A549 (cell line): ENCODE measurements at regions of chr7 and their contacts with region 1.

Region 1: GRCh38 chr7:151631968-151632749 is 112.5 kb upstream of the RHEB start:
- DNase-seq: peak; percentile 49 to 77
- ATAC-seq: peak; percentile 91
- H3K4me3 ChIP-seq: peak overlapping the region; percentile 91
- H3K27ac ChIP-seq: peak overlapping the region; percentile 94
- H3K4me1 ChIP-seq: peaks cover 27% of the 10 kb centered on the region
- CTCF ChIP-seq: peak; percentile 82
- EP300 ChIP-seq: no peak
- POLR2A ChIP-seq: peak; percentile 46
- RAD21 ChIP-seq: peak; percentile 32 to 62; a peak in 4 of 5 replicates

Region 2: DNA sequence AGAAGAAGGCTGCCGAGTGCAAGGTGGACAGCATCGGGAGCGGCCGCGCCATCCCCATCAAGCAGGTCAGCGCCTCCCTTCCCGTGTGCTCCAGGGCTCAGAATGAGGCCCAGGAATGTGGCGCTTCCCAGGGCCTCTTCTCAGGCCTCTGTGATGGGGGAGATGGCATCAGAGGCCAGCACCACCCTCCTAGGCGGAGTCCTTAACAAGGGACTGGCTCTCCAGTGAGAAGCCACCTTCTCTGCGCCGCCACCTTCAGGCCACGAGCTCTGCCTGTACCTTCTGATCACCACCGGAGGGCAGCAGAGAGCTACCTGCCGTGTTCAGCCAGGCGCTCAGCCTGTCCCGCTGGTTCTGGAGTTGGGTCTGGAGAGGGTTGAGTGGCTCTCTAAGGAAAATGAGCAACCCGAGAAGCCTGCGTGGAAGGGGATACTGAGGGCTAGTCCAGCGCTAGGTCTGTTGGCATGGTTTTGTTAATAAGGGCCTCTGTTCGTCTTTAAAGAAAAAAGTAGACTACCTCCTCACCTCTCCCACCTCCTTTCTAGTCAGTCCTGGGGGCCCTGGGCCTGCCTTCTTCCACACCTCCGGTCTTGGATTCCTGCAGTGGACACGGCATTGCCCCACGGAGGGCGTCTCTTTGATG is 508.2 kb before region 1 on chr7:
- CTCF ChIA-PET with region 1: no interaction called
- POLR2A ChIA-PET with region 1: no interaction called
- DNase-seq: peak; percentile 85 to 94
- ATAC-seq: peak; percentile 90 to 96
- H3K4me3 ChIP-seq: no peak overlapping the region
- H3K27ac ChIP-seq: no peak overlapping the region
- H3K4me1 ChIP-seq: no peaks in the 10 kb centered on the region
- CTCF ChIP-seq: peak; percentile 97
- EP300 ChIP-seq: no peak
- POLR2A ChIP-seq: no peak
- RAD21 ChIP-seq: peak; percentile 85 to 87

Region 3: GRCh38 chr7:151432791-151433521 is 199.2 kb before region 1 on chr7:
- CTCF ChIA-PET with region 1: no interaction called
- POLR2A ChIA-PET with region 1: no interaction called
- DNase-seq: peak in 1 of 2 experiments; percentile 49
- ATAC-seq: peak in 1 of 2 experiments; percentile 57; a peak in 3 of 6 replicates
- H3K4me3 ChIP-seq: no peak overlapping the region
- H3K27ac ChIP-seq: peak overlapping the region in 1 of 2 experiments; percentile 52; a peak in 3 of 6 replicates
- H3K4me1 ChIP-seq: peaks cover 23% of the 10 kb centered on the region
- CTCF ChIP-seq: no peak
- EP300 ChIP-seq: no peak
- POLR2A ChIP-seq: no peak
- RAD21 ChIP-seq: no peak

Region 4: GRCh38 chr7:151590071-151590850 is 41.9 kb before region 1 on chr7:
- CTCF ChIA-PET with region 1: interaction called, 11 read pairs
- POLR2A ChIA-PET with region 1: no interaction called
- DNase-seq: no peak
- ATAC-seq: no peak
- H3K4me3 ChIP-seq: no peak overlapping the region
- H3K27ac ChIP-seq: no peak overlapping the region
- H3K4me1 ChIP-seq: peaks cover 16% of the 10 kb centered on the region; the same call in 2 of the 3 replicates
- CTCF ChIP-seq: no peak
- EP300 ChIP-seq: no peak
- POLR2A ChIP-seq: no peak
- RAD21 ChIP-seq: no peak

Region 5: GRCh38 chr7:151652111-151652510 is 20.0 kb after region 1 on chr7:
- CTCF ChIA-PET with region 1: interaction called, 15 read pairs
- POLR2A ChIA-PET with region 1: interaction called, 4 read pairs
- DNase-seq: no peak
- ATAC-seq: no peak
- H3K4me3 ChIP-seq: no peak overlapping the region
- H3K27ac ChIP-seq: peak overlapping the region; percentile 70 to 78; a peak in 3 of 6 replicates
- H3K4me1 ChIP-seq: peaks cover 32% of the 10 kb centered on the region
- CTCF ChIP-seq: no peak
- EP300 ChIP-seq: no peak
- POLR2A ChIP-seq: no peak
- RAD21 ChIP-seq: no peak

Region 6: DNA sequence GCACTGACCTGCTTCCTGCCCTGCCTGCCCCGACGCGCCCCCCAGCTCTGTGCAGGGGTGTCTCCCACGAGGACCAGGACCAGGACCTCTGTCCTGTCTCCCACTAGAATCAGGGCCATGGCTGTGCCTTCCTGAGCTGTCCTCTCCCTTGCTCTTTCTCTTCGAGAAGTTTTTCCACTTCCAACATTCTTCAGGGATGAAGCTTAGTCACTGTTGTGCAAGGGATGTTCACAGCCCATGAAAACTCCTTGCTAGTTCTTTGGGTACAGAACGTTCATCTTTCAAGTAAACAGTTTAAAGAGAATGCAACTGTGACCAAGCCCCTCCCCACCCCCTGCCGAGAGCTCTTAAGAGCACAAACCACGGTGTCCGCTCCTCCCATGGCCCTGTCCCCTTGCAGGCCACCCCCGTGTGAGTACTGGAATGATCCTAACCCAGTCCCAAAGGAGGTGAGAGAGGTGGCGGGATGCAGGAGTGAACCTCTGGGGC is 48.6 kb after region 1 on chr7:
- CTCF ChIA-PET with region 1: interaction called, 13 read pairs
- POLR2A ChIA-PET with region 1: interaction called, 3 read pairs
- DNase-seq: no peak
- ATAC-seq: no peak
- H3K4me3 ChIP-seq: no peak overlapping the region
- H3K27ac ChIP-seq: peak overlapping the region; percentile 54 to 61; a peak in 4 of 6 replicates
- H3K4me1 ChIP-seq: peaks cover 3% of the 10 kb centered on the region; the same call in 1 of the 3 replicates
- CTCF ChIP-seq: no peak
- EP300 ChIP-seq: no peak
- POLR2A ChIP-seq: no peak
- RAD21 ChIP-seq: no peak

Region 7: DNA sequence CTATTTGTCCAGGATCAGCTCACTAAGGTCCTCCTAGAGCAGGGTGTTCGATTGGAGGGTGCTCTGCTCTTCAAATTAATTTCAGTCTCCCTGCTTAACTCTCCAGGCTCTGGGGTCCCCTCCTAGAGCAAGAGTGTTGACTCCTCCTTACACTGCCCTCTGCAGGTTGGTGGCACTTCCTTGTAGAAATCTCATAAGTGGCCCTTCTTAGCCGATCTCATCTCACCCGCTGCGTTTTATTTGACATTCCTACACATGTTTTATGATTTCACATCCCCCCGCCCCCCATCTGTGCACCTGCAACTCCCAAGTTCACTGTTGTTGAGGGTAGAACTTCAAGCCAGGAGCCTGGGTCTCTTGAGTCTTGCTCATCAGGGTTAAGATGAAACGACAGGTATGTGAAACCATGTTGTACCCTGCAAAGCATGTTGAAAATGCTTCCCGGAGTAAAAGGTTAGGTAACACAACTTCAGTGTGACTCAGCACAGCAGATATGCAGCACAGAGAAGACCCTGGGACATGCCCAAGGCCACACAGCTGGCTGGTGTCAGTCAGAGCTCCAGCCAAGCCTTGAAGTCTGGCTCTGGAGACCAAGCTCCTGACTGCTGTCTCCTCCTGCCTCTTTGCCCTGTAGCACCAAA is 73.6 kb after region 1 on chr7:
- CTCF ChIA-PET with region 1: interaction called, 44 read pairs
- POLR2A ChIA-PET with region 1: interaction called, 3 read pairs
- DNase-seq: peak; percentile 61 to 81
- ATAC-seq: peak; percentile 63 to 88
- H3K4me3 ChIP-seq: no peak overlapping the region
- H3K27ac ChIP-seq: peak overlapping the region; percentile 64 to 80
- H3K4me1 ChIP-seq: peaks cover 27% of the 10 kb centered on the region
- CTCF ChIP-seq: peak; percentile 78
- EP300 ChIP-seq: no peak
- POLR2A ChIP-seq: no peak
- RAD21 ChIP-seq: peak; percentile 74 to 79

Region 8: GRCh38 chr7:151754142-151754590 is 122.0 kb after region 1 on chr7:
- CTCF ChIA-PET with region 1: interaction called, 173 read pairs
- POLR2A ChIA-PET with region 1: interaction called, 6 read pairs
- DNase-seq: peak; percentile 97 to 98
- ATAC-seq: peak; percentile 96 to 98
- H3K4me3 ChIP-seq: no peak overlapping the region
- H3K27ac ChIP-seq: peak overlapping the region; percentile 91 to 96
- H3K4me1 ChIP-seq: peaks cover 41% of the 10 kb centered on the region
- CTCF ChIP-seq: peak; percentile 94
- EP300 ChIP-seq: peak; percentile 73 to 87; a peak in 3 of 5 replicates
- POLR2A ChIP-seq: no peak
- RAD21 ChIP-seq: peak; percentile 77 to 85

Region 9: DNA sequence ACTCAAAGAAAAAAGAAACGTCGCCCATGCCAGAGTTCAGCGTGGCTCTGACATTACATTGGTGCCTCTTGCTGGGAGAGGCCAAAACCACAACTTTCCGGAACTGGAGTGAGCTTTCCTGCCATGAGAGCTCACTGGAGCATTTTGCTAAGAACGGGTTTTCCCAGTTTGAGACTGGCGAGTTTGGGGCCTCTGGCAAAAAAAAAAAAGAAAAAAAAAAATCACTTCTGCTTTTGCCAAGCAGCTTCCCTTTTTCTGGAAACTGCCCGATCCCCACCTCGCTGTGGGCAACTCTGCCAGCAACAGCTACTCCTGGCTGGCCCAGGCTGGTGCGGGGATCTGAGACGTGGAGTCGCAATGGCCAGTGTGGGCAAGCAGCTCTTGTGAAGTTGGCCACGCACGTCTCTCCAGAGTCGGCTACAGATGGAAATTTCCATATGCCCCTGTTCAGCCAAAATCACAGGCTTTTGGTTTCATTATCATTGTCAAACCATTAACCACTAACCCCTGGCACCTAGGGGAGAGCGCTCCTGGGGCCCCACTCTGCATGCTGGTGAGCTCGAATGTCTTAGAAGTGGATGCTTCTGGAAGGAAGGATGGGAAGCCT is 219.1 kb after region 1 on chr7:
- CTCF ChIA-PET with region 1: no interaction called
- POLR2A ChIA-PET with region 1: no interaction called
- DNase-seq: no peak
- ATAC-seq: no peak
- H3K4me3 ChIP-seq: no peak overlapping the region
- H3K27ac ChIP-seq: no peak overlapping the region
- H3K4me1 ChIP-seq: no peaks in the 10 kb centered on the region
- CTCF ChIP-seq: no peak
- EP300 ChIP-seq: no peak
- POLR2A ChIP-seq: no peak
- RAD21 ChIP-seq: no peak